ENCODE measurements at regions of chr7 and their contacts with region 1.

Region 1: GRCh38 chr7:105454921-105455320 is 66.2 kb upstream of the SRPK2 start:
- DNase-seq: no peak
- H3K4me3 Mint-ChIP-seq: no peak overlapping the region
- H3K27ac Mint-ChIP-seq: no peak overlapping the region
- H3K4me1 Mint-ChIP-seq: peaks cover 6% of the 10 kb centered on the region
- H3K27me3 Mint-ChIP-seq: no peaks in the 10 kb centered on the region

Region 2: DNA sequence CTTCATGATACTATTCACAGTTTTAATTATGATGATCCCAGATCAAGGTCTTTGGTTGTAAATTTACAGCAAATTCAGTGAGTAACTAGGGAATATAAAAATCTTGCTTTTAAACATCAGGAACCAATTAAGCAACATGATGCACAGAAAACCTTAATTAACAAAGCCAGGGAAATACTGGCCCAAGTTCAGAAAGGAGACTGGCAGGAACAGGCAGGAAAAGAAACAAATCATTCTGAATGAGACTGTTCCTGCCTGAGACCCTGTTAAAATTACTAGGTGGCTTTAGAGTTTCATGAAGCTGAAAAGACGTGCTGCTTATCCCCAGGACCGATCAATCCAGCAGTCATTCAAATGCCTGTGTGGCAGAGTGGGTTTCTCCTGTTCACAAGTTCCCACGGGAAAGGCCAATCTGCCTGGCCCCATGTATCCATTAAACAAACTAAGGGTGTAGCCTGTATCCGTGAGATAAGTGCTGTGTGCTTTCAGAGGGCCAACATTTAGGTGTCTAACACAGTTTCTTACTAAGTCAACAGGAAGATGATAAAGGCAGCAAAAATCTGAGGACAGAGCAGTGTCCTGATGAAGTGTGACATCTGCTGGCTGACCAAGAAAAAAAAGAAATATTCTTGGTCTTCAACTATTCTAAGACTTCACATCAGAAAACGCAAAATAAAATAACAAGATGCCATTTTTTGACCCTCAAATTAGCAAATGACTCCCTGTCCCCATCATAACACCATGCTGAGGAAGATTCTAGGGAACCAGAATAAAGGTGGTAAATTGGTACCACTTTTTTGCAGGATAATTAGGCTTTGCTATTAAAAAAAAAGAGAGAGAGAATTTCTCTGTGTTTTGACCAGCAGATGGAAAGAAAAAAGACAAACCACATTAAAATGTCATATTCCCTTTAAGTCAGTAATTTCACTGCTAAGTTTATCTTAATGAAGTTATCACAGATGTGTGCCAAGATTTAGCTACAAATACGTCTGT is 33.0 kb after region 1 on chr7:
- intact Hi-C with region 1: loop called (anchors 1 kb)
- DNase-seq: peak; percentile 66
- H3K4me3 Mint-ChIP-seq: no peak overlapping the region
- H3K27ac Mint-ChIP-seq: peak overlapping the region; percentile 1
- H3K4me1 Mint-ChIP-seq: no peaks in the 10 kb centered on the region
- H3K27me3 Mint-ChIP-seq: no peaks in the 10 kb centered on the region

Measured in activated CD4-positive, alpha-beta T cell treated with anti-CD3 and anti-CD28 coated beads, Interleukin-2, amount 10 ng/mL, durations not matched to agents 24 days and 14 days (primary cell).